ENCODE measurements at regions of chr18 and their contacts with region 1.

Region 1: GRCh38 chr18:1573732-1574131 is 669.1 kb downstream of the ADCYAP1 start:
- H3K4me3 ChIP-seq: no peak overlapping the region
- H3K27ac ChIP-seq: no peak overlapping the region
- H3K4me1 ChIP-seq: no peaks in the 10 kb centered on the region
- CTCF ChIP-seq: no peak

Region 2: DNA sequence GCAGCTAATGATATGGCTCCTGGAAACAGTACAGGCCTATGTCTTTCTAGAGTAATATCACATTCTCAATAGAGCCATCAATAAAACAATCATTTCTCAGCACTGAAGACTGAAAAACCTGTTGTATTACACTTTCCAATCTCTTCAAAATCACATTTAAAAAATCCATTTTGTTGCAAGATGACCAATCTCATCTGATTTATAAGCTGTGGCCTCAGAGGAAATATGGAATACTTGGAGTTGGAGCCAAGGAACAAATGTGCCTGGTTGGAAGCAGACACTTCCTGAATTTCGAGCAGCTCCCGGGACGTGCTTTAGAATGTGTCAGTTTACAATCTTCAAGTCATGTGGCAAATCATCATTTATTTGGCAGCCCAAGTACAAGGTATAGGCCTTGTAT is 554.5 kb before region 1 on chr18:
- CTCF ChIA-PET with region 1: no interaction called
- POLR2A ChIA-PET with region 1: no interaction called
- H3K4me3 ChIP-seq: no peak overlapping the region
- H3K27ac ChIP-seq: no peak overlapping the region
- H3K4me1 ChIP-seq: no peaks in the 10 kb centered on the region; the same call in 1 of the 2 replicates
- CTCF ChIP-seq: no peak

Region 3: DNA sequence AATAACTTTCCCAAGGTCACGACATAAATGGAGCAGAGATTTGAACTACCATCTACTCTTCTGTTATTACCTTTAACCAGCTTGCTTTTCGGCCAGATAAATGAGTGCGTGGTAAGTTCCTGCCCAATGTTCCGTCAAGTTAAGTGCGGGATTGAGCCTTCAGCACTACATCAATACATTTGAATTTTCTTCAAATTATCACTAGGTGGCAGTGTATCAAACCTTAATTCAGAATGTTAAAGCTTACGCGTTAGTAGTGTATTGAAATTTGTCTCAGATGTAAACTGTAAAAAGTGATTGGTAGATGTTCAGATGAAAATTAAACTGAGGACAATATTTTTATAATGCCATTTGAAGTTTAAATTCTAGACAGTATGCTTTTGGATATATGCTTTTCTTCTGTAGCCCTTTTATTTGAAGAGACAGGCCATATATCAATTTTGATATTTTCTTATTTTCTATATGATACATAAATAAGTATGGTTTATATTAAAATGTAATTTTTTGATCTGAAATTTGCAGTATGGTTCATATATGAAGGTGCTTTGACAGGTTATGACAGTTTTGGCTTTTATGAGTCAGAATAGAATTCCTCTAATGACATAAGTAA is 12.3 kb after region 1 on chr18:
- CTCF ChIA-PET with region 1: interaction called, 15 read pairs
- POLR2A ChIA-PET with region 1: no interaction called
- H3K4me3 ChIP-seq: no peak overlapping the region
- H3K27ac ChIP-seq: no peak overlapping the region
- H3K4me1 ChIP-seq: no peaks in the 10 kb centered on the region
- CTCF ChIP-seq: no peak

Region 4: GRCh38 chr18:1604751-1605150 is 31.0 kb after region 1 on chr18:
- CTCF ChIA-PET with region 1: no interaction called
- POLR2A ChIA-PET with region 1: no interaction called
- H3K4me3 ChIP-seq: no peak overlapping the region
- H3K27ac ChIP-seq: no peak overlapping the region
- H3K4me1 ChIP-seq: no peaks in the 10 kb centered on the region
- CTCF ChIP-seq: no peak

Region 5: GRCh38 chr18:1779587-1779986 is 205.9 kb after region 1 on chr18:
- CTCF ChIA-PET with region 1: no interaction called
- POLR2A ChIA-PET with region 1: no interaction called
- H3K4me3 ChIP-seq: no peak overlapping the region
- H3K27ac ChIP-seq: no peak overlapping the region
- H3K4me1 ChIP-seq: no peaks in the 10 kb centered on the region
- CTCF ChIP-seq: no peak